GM12878 (cell line): ENCODE measurements at regions of chr17 and their contacts with region 1.

Region 1: DNA sequence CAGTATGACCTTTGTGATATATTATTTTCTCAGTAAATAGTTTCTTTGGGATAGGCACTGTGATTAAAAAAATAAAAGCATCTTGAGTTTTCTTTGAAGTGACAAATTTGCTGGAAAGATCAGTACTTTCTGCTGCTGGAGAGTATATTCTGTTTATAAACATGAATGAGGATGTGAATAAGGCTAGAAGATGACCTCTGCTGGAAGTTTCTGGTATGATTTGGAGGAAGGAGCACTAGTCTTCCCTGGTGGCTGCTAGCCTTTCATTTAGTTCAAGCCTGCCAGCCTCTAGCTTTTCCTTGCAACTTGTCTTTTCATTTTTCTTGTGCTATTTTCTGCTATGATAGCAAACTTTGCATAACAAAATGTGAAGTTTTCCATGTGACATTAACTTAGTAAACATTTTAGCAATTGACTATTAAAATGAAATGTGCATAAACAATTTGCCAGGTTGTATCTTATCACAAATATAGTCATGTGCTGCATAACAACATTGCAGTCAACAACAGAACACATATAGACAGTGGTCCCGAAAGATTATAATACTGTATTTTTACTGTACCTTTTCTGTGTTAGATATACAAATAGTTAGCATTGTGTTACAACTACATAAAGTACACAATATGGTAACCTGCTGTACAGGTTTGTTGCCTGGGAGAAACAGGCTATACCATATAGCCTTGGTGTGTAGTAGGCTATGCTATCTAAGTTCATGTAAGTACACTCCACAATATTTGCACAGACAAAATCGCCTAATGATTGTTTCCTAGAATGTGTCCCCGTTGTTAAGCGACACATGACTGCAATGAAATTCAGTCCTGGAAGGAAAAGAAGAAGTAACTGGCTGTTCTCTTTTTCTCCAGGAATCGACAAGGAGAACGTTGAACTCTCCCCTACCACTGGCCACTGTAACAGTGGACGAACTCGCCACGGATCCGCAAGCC is 18.1 kb upstream of the RAB11FIP4 start:
- DNase-seq: peak; percentile 31
- ATAC-seq: peak; percentile 92
- H3K4me3 ChIP-seq: no peak overlapping the region
- H3K27ac ChIP-seq: no peak overlapping the region
- H3K4me1 ChIP-seq: peaks cover 16% of the 10 kb centered on the region
- H3K27me3 ChIP-seq: no peaks in the 10 kb centered on the region
- CTCF ChIP-seq: peak; percentile 61 to 73 (median 70)
- EP300 ChIP-seq: no peak
- POLR2A ChIP-seq: no peak
- RAD21 ChIP-seq: peak; percentile 76

Region 2: GRCh38 chr17:31216053-31216751 is 157.2 kb before region 1 on chr17:
- CTCF ChIA-PET with region 1: interaction called, 47 read pairs
- POLR2A ChIA-PET with region 1: no interaction called
- RAD21 ChIA-PET with region 1: interaction called, 15 read pairs
- SMC1A ChIA-PET with region 1: interaction called, 78 read pairs
- in situ Hi-C with region 1: no loop called
- intact Hi-C with region 1: loop called (anchors 5 kb)
- DNase-seq: peak; percentile 17
- ATAC-seq: peak; percentile 40
- H3K4me3 ChIP-seq: no peak overlapping the region
- H3K27ac ChIP-seq: no peak overlapping the region
- H3K4me1 ChIP-seq: no peaks in the 10 kb centered on the region
- H3K27me3 ChIP-seq: no peaks in the 10 kb centered on the region
- CTCF ChIP-seq: peak; percentile 6 to 57 (median 32); a peak in 3 of 6 replicates
- EP300 ChIP-seq: no peak
- POLR2A ChIP-seq: no peak
- RAD21 ChIP-seq: peak; percentile 66

Region 3: DNA sequence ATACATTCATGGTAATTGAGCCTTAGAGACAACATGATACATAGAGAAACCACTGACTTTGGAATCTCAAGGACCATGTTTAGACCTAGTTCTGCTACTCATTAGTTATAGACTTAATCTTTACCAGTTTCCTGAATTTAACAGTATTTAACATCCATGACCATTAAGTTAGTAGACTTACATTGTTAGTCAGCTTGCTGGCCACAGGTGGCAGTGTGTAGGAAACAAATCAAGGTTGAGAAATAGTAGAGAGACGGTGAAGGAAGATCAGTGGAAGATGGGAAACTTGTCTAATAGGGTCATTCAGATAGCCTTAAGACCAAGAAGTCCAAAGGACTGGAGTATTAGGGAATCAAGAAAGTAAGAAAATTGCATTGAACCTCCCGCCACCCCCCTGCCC is 107.4 kb before region 1 on chr17:
- CTCF ChIA-PET with region 1: interaction called, 38 read pairs
- POLR2A ChIA-PET with region 1: no interaction called
- RAD21 ChIA-PET with region 1: interaction called, 5 read pairs
- SMC1A ChIA-PET with region 1: interaction called, 6 read pairs
- in situ Hi-C with region 1: no loop called
- intact Hi-C with region 1: no loop called
- DNase-seq: no peak
- ATAC-seq: no peak
- H3K4me3 ChIP-seq: no peak overlapping the region
- H3K27ac ChIP-seq: no peak overlapping the region
- H3K4me1 ChIP-seq: no peaks in the 10 kb centered on the region
- H3K27me3 ChIP-seq: no peaks in the 10 kb centered on the region
- CTCF ChIP-seq: peak; percentile 21 to 33 (median 29); a peak in 3 of 6 replicates
- EP300 ChIP-seq: no peak
- POLR2A ChIP-seq: no peak
- RAD21 ChIP-seq: peak; percentile 29; the same call in 1 of the 2 replicates

Region 4: DNA sequence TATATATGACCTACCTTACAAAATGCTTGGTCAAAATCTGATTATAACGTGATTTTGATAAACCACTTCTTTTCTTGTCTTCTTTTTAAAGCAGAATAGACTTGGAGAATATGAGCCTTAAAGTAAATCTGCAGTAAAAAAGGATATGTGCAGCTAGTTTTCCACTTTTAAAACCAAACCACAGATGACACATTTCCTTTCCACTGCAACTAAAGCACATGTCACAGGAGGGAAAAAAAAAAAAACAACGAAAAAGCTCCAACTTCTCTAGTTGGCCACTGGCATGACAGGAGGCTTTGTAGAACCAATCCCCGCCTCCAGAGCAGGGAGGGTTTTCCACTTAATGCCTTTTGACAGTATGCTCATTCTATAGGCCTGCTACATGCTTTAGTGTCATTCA is 51.9 kb before region 1 on chr17 and contains the start of gene EVI2A:
- CTCF ChIA-PET with region 1: interaction called, 80 read pairs
- POLR2A ChIA-PET with region 1: interaction called, 3 read pairs
- RAD21 ChIA-PET with region 1: interaction called, 5 read pairs
- SMC1A ChIA-PET with region 1: interaction called, 86 read pairs
- in situ Hi-C with region 1: no loop called
- intact Hi-C with region 1: no loop called
- DNase-seq: peak; percentile 69
- ATAC-seq: peak; percentile 74
- H3K4me3 ChIP-seq: peak within 1 kb of the TSS; percentile 65
- H3K27ac ChIP-seq: peak within 1 kb of the TSS; percentile 95
- H3K4me1 ChIP-seq: peaks cover 4% of the 10 kb centered on the region; the same call in 1 of the 2 replicates
- H3K27me3 ChIP-seq: no peaks in the 10 kb centered on the region
- CTCF ChIP-seq: no peak
- EP300 ChIP-seq: peak in 1 of 2 experiments; percentile 31; a peak in 1 of 4 replicates
- POLR2A ChIP-seq: no peak
- RAD21 ChIP-seq: no peak
- polyA plus RNA-seq, gene EVI2A: 54.5 to 78.3 TPM